Endothelial cell of umbilical vein (primary cell): ENCODE measurements at regions of chr13 and their contacts with region 1.

Region 1: DNA sequence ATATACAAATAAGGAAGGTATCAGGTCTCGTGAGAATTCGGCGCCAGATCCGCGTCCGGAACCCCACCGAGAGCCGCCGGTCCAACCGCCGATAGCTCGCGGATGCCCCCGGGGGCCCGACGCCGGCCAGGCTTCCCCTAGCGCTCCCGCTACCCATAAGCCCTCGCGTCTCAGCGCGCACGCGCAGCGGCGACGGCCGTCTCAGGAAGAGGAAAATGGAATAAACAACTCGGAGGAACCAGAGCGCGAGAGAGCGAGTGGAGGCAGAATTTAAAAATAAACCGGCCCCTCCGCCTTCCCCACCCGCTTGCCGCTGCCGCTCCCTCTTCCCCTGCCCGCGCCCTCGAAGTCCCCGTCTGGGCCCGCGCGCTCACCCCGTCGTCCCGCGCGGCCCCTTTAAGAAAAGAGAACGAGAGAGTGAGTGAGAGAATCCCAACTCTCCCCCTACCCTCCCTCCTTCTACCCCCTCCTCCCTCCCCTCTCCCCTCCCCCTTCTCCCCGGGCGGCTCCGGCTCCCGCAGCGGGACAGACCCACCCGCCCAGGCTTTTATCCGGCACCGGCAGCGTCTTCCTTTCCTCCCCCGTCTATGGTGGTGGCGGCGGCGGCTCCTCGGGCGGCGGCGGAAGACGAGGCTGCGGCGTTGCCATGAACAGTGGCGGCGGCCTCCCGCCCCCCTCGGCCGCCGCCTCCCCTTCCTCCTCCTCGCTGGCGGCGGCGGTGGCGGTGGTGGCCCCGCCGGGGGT is at the start of gene PAN3:
- DNase-seq: peak; percentile 92
- H3K4me3 ChIP-seq: peak within 1 kb of the TSS; percentile 78 to 100 (median 99)
- H3K27ac ChIP-seq: peak within 1 kb of the TSS; percentile 93
- H3K4me1 ChIP-seq: peaks cover 20% of the 10 kb centered on the region
- H3K27me3 ChIP-seq: no peaks in the 10 kb centered on the region
- CTCF ChIP-seq: no peak
- POLR2A ChIP-seq: peak; percentile 91
- total RNA-seq, gene PAN3: 31.6 and 31.9 TPM in 2 replicates

Region 2: GRCh38 chr13:28110414-28110813 is 27.8 kb before region 1 on chr13:
- CTCF ChIA-PET with region 1: no interaction called
- POLR2A ChIA-PET with region 1: no interaction called
- dilution Hi-C with region 1: no loop called
- intact Hi-C with region 1: no loop called
- DNase-seq: no peak
- H3K4me3 ChIP-seq: no peak overlapping the region
- H3K27ac ChIP-seq: no peak overlapping the region
- H3K4me1 ChIP-seq: no peaks in the 10 kb centered on the region
- H3K27me3 ChIP-seq: peaks cover 0 to 17% of the 10 kb centered on the region in 2 experiments
- CTCF ChIP-seq: no peak
- POLR2A ChIP-seq: no peak

Region 3: GRCh38 chr13:28258417-28258816 is 120.2 kb after region 1 on chr13:
- CTCF ChIA-PET with region 1: no interaction called
- POLR2A ChIA-PET with region 1: no interaction called
- dilution Hi-C with region 1: no loop called
- intact Hi-C with region 1: loop called (anchors 2 kb)
- DNase-seq: peak; percentile 87
- H3K4me3 ChIP-seq: no peak overlapping the region
- H3K27ac ChIP-seq: no peak overlapping the region
- H3K4me1 ChIP-seq: peaks cover 10% of the 10 kb centered on the region
- H3K27me3 ChIP-seq: no peaks in the 10 kb centered on the region
- CTCF ChIP-seq: no peak
- POLR2A ChIP-seq: peak; percentile 47